ENCODE measurements at regions of chrX and their contacts with region 1.

Region 1: GRCh38 chrX:119791438-119792231 is at the start of gene RPL39:
- H3K4me3 Mint-ChIP-seq: peak within 1 kb of the TSS; percentile 88
- H3K27ac Mint-ChIP-seq: peak within 1 kb of the TSS; percentile 92
- H3K4me1 Mint-ChIP-seq: peaks cover 12% of the 10 kb centered on the region
- H3K27me3 Mint-ChIP-seq: no peaks in the 10 kb centered on the region

Region 2: GRCh38 chrX:119757979-119758730 is 33.5 kb before region 1 on chrX and contains the start of gene SOWAHD:
- intact Hi-C with region 1: loop called (anchors 5 kb)
- H3K4me3 Mint-ChIP-seq: peak within 1 kb of the TSS; percentile 90
- H3K27ac Mint-ChIP-seq: peak within 1 kb of the TSS; percentile 91
- H3K4me1 Mint-ChIP-seq: peaks cover 49% of the 10 kb centered on the region
- H3K27me3 Mint-ChIP-seq: no peaks in the 10 kb centered on the region

Region 3: GRCh38 chrX:119871599-119872395 is 80.2 kb after region 1 on chrX and contains the starts of genes NDUFA1 and RNF113A:
- intact Hi-C with region 1: loop called (anchors 2 kb)
- H3K4me3 Mint-ChIP-seq: peak within 1 kb of the TSS; percentile 94
- H3K27ac Mint-ChIP-seq: peak within 1 kb of the TSS; percentile 98
- H3K4me1 Mint-ChIP-seq: peaks cover 12% of the 10 kb centered on the region
- H3K27me3 Mint-ChIP-seq: no peaks in the 10 kb centered on the region

Region 4: GRCh38 chrX:119943185-119943988 is 151.8 kb after region 1 on chrX and contains the start of gene NKAP:
- intact Hi-C with region 1: loop called (anchors 5 kb)
- H3K4me3 Mint-ChIP-seq: peak within 1 kb of the TSS; percentile 94
- H3K27ac Mint-ChIP-seq: peak within 1 kb of the TSS; percentile 85
- H3K4me1 Mint-ChIP-seq: peaks cover 19% of the 10 kb centered on the region
- H3K27me3 Mint-ChIP-seq: no peaks in the 10 kb centered on the region

Measured in dendritic cell treated with granulocyte-macrophage colony-stimulating factor and Interleukin-4, amounts not matched to agents 40 ng/mL and 50 ng/mL, for 4 days (primary cell).